Heart left ventricle (tissue), 16 donors: ENCODE measurements at regions of chr18 and their contacts with region 1.

Region 1: GRCh38 chr18:55343396-55344073 is 244.5 kb downstream of the TCF4 start:
- DNase-seq: no peak
- ATAC-seq: peak in 3 of 4 donors; percentile 56 to 64 (median 57)
- H3K4me3 ChIP-seq: no peak overlapping the region
- H3K27ac ChIP-seq: peak overlapping the region in 2 of 12 donors; percentile 4 to 21
- H3K4me1 ChIP-seq: peaks cover 0 to 61% (median 17%) of the 10 kb centered on the region in 12 donors
- H3K27me3 ChIP-seq: no peaks in the 10 kb centered on the region
- CTCF ChIP-seq: peak; percentile 38 to 74 (median 58)
- POLR2A ChIP-seq: no peak

Region 2: GRCh38 chr18:55161916-55162315 is 181.6 kb before region 1 on chr18:
- intact Hi-C with region 1: no loop called
- DNase-seq: no peak
- ATAC-seq: peak in 1 of 4 donors; percentile 18
- H3K4me3 ChIP-seq: no peak overlapping the region
- H3K27ac ChIP-seq: no peak overlapping the region
- H3K4me1 ChIP-seq: no peaks in the 10 kb centered on the region
- H3K27me3 ChIP-seq: no peaks in the 10 kb centered on the region
- CTCF ChIP-seq: no peak
- POLR2A ChIP-seq: no peak

Region 3: DNA sequence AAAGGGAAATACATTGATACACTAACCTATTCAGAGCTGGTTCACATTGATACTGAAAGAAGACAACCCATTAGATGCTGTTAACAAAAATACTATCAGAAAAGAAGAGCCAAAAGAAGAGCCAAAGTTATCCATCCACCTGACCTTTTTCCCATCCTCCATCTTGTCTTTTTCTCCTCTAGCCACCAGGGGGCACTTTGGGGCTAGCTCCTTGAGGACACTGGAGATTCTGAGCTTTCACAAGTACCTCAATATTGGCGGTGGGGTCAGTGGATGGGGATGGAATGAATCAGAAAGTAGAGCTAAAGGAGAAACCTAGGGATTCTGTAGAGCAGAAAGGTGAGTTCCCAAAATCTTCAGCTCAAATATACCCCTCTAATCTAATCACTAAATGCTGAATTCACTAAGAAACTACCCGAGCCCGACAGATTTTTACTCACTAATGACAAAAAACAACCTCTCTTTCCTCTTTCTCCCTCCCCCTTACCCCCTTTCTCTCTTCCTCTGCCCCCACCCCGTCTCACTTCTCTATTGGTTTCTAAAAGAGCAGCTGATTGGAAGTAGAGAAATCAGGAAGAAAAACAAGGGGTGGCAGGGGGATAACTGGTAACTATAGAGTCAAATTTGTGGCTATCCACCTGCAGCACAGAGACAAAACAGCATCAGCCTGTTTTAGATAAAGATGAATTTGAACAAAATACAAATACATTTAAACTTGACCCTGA is 41.2 kb after region 1 on chr18:
- intact Hi-C with region 1: loop called in 1 of 10 experiments (anchors 5 kb)
- DNase-seq: no peak
- ATAC-seq: no peak
- H3K4me3 ChIP-seq: no peak overlapping the region
- H3K27ac ChIP-seq: peak overlapping the region in 1 of 12 donors; percentile 10
- H3K4me1 ChIP-seq: peaks cover 0 to 35% (median 23%) of the 10 kb centered on the region in 12 donors
- H3K27me3 ChIP-seq: no peaks in the 10 kb centered on the region
- CTCF ChIP-seq: peak in 11 of 12 donors; percentile 13 to 59 (median 41)
- POLR2A ChIP-seq: no peak

Region 4: GRCh38 chr18:55795101-55795669 is 451.6 kb after region 1 on chr18:
- intact Hi-C with region 1: no loop called
- DNase-seq: no peak
- ATAC-seq: peak in 3 of 4 donors; percentile 16 to 60 (median 31)
- H3K4me3 ChIP-seq: peak overlapping the region in 9 of 12 donors; percentile 8 to 41 (median 27)
- H3K27ac ChIP-seq: peak overlapping the region; percentile 12 to 86 (median 64)
- H3K4me1 ChIP-seq: peaks cover 0 to 21% (median 4%) of the 10 kb centered on the region in 12 donors
- H3K27me3 ChIP-seq: no peaks in the 10 kb centered on the region
- CTCF ChIP-seq: no peak
- POLR2A ChIP-seq: no peak

Region 5: GRCh38 chr18:55861266-55861665 is 517.7 kb after region 1 on chr18:
- intact Hi-C with region 1: loop called in 2 of 10 experiments (anchors 10 kb)
- DNase-seq: no peak
- ATAC-seq: peak in 1 of 4 donors; percentile 24
- H3K4me3 ChIP-seq: no peak overlapping the region
- H3K27ac ChIP-seq: no peak overlapping the region
- H3K4me1 ChIP-seq: peaks cover 0 to 23% (median 6%) of the 10 kb centered on the region in 12 donors
- H3K27me3 ChIP-seq: no peaks in the 10 kb centered on the region
- CTCF ChIP-seq: peak in 9 of 12 donors; percentile 28 to 57 (median 41)
- POLR2A ChIP-seq: no peak